CD4-positive, alpha-beta memory T cell (primary cell): ENCODE measurements at regions of chr6 and their contacts with region 1.

Region 1: DNA sequence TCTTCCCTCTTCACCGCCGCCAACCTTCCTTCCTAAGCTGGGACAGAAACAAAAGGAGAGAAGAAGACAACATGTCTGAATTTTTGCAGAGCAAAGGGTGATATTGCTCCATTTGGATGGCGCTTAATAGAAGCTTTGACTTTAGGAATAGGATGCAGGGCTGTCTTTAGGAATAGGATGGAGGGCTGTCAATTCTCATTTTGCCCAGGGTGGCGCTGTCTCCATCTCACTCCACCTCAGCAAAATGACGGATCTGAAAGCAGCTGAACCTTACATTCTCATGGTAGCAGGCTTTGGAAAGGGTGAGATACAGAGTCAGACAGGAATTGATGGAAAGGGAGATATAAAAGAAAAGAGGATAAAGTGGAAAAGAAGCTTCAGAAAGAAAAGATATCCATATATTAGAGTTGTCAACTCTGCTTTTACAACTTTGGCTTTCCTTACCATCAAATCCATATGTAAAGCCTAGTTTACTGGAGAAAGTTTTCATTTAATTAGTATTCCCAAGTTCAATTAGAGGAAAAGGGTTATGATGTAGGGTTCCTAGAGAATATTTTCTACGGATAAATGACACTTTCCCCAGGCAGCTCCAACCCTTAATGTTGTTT is 2.4 kb downstream of the MTCL3 start:
- DNase-seq: peak in 4 of 5 donors; percentile 51 to 60 (median 53)
- H3K4me3 ChIP-seq: peak overlapping the region; percentile 54 to 61
- H3K4me3 Mint-ChIP-seq: peak overlapping the region; percentile 83 to 96 (median 92)
- H3K27ac ChIP-seq: peak overlapping the region; percentile 50
- H3K27ac Mint-ChIP-seq: peak overlapping the region; percentile 43 to 93 (median 88)
- H3K4me1 ChIP-seq: peaks cover 40% of the 10 kb centered on the region
- H3K4me1 Mint-ChIP-seq: peaks cover 26 to 51% (median 38%) of the 10 kb centered on the region in 4 donors
- H3K27me3 ChIP-seq: peaks cover 16% of the 10 kb centered on the region
- H3K27me3 Mint-ChIP-seq: peaks cover 14 to 21% of the 10 kb centered on the region in 2 donors

Region 2: DNA sequence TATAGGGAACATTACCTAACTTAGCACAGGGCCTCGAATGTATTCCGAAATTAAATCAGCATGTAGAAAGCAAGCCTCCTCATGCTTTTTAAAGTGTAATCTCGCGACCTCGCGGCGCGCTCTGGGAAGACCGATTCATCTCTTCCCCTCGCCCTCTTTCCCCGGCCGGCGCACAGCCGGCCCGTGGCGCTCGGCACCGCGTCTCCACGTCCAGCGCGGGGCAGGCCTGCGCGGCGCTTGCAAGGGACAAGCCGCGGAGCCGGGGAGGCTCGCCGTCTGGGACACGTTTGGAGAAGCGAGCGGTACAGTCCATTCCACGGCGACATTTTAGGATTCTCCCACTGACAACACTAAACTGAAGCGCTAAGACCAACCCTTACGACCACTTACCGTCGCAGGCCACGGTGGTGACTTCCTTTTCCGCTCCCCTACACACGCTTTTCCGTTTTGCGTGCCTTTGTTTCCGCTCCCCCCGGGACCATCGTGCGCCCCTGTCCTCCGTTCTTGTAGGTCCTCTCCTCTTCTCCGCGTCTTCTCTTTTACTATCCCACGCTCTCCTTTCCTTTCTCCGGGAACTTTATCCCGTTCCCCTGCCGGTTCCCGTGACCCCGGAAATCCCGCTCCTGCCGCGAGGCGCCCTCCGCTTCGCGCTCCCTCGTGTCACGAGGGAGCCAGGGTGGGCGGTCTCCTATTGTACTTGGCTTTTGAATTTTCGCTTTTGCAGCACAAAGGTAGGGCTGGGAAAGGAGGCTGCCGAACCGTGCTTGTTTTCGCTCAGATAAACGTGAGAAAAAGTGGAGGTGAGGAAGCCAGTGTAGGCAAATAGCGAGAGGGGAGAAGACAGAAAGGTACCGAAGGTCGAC is 173.6 kb before region 1 on chr6 and contains the start of gene ECHDC1:
- CTCF ChIA-PET with region 1: interaction called, 3 read pairs
- POLR2A ChIA-PET with region 1: interaction called, 7 read pairs
- intact Hi-C with region 1: loop called (anchors 2 kb)
- DNase-seq: peak; percentile 65 to 71 (median 69)
- H3K4me3 ChIP-seq: peak within 1 kb of the TSS; percentile 70 to 97
- H3K4me3 Mint-ChIP-seq: no peak within 1 kb of the TSS
- H3K27ac ChIP-seq: peak within 1 kb of the TSS; percentile 65
- H3K27ac Mint-ChIP-seq: no peak within 1 kb of the TSS
- H3K4me1 ChIP-seq: peaks cover 52% of the 10 kb centered on the region
- H3K4me1 Mint-ChIP-seq: peaks cover 4 to 18% (median 12%) of the 10 kb centered on the region in 4 donors
- H3K27me3 ChIP-seq: no peaks in the 10 kb centered on the region
- H3K27me3 Mint-ChIP-seq: no peaks in the 10 kb centered on the region
- total RNA-seq, gene ECHDC1: 35.5 to 39.3 TPM

Region 3: GRCh38 chr6:127484212-127484858 is 32.4 kb before region 1 on chr6:
- CTCF ChIA-PET with region 1: interaction called, 125 read pairs
- POLR2A ChIA-PET with region 1: interaction called, 31 read pairs
- intact Hi-C with region 1: loop called (anchors 1 kb)
- DNase-seq: peak in 4 of 5 donors; percentile 15 to 40 (median 34)
- H3K4me3 ChIP-seq: peak overlapping the region; percentile 26 to 38
- H3K4me3 Mint-ChIP-seq: peak overlapping the region; percentile 73 to 91 (median 83)
- H3K27ac ChIP-seq: peak overlapping the region; percentile 41
- H3K27ac Mint-ChIP-seq: peak overlapping the region; percentile 36 to 84 (median 67)
- H3K4me1 ChIP-seq: peaks cover 17% of the 10 kb centered on the region
- H3K4me1 Mint-ChIP-seq: peaks cover 14 to 27% (median 24%) of the 10 kb centered on the region in 4 donors
- H3K27me3 ChIP-seq: no peaks in the 10 kb centered on the region
- H3K27me3 Mint-ChIP-seq: no peaks in the 10 kb centered on the region

Region 4: GRCh38 chr6:127496471-127496870 is 20.3 kb before region 1 on chr6:
- CTCF ChIA-PET with region 1: interaction called, 125 read pairs
- POLR2A ChIA-PET with region 1: interaction called, 3 read pairs
- intact Hi-C with region 1: no loop called
- DNase-seq: no peak
- H3K4me3 ChIP-seq: no peak overlapping the region
- H3K4me3 Mint-ChIP-seq: no peak overlapping the region
- H3K27ac ChIP-seq: no peak overlapping the region
- H3K27ac Mint-ChIP-seq: no peak overlapping the region
- H3K4me1 ChIP-seq: peaks cover 4% of the 10 kb centered on the region
- H3K4me1 Mint-ChIP-seq: peaks cover 0 to 4% (median 2%) of the 10 kb centered on the region in 4 donors
- H3K27me3 ChIP-seq: no peaks in the 10 kb centered on the region
- H3K27me3 Mint-ChIP-seq: no peaks in the 10 kb centered on the region

Region 5: DNA sequence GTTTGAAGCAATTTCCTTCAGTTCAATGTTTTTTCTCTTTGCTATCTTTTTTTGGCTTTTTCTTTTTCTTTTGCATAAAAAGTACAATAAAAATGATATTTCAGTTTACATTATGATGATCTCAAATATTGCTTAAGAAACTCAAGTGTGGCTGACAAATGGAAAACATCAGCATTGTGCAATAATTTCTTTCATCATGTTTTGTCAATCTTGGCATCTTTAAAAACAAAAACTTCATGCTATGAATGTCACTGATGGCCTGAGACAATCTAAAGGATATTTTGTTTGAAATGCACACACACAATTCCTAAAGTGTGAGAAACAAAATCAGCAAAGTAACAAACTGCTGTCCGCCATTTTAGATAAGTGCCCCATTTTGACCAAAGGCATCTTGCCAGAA is 16.2 kb after region 1 on chr6:
- CTCF ChIA-PET with region 1: interaction called, 43 read pairs
- POLR2A ChIA-PET with region 1: no interaction called
- intact Hi-C with region 1: no loop called
- DNase-seq: no peak
- H3K4me3 ChIP-seq: no peak overlapping the region
- H3K4me3 Mint-ChIP-seq: no peak overlapping the region
- H3K27ac ChIP-seq: no peak overlapping the region
- H3K27ac Mint-ChIP-seq: no peak overlapping the region
- H3K4me1 ChIP-seq: no peaks in the 10 kb centered on the region
- H3K4me1 Mint-ChIP-seq: no peaks in the 10 kb centered on the region
- H3K27me3 ChIP-seq: no peaks in the 10 kb centered on the region
- H3K27me3 Mint-ChIP-seq: peaks cover 10 to 15% of the 10 kb centered on the region in 2 donors

Region 6: DNA sequence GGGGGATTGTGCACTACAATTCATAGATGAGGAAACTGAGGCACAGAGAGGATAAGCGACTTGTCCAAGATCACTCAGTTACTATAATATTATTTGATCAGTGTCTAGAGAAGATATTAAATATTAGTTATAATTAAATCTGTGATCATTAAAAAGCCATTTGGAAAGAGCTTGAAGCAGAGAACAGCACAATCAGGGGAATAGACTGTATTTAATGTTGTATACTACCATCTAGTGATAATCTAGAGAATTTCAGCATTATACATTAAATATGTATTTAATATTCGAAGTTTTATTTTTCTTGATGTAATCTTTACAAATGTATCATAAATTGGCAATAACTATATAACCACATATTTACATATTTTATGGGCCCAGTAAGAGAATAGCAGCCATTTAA is 22.5 kb after region 1 on chr6:
- CTCF ChIA-PET with region 1: interaction called, 43 read pairs
- POLR2A ChIA-PET with region 1: interaction called, 3 read pairs
- intact Hi-C with region 1: loop called (anchors 1 kb)
- DNase-seq: peak in 4 of 5 donors; percentile 15 to 36 (median 22)
- H3K4me3 ChIP-seq: no peak overlapping the region
- H3K4me3 Mint-ChIP-seq: no peak overlapping the region
- H3K27ac ChIP-seq: no peak overlapping the region
- H3K27ac Mint-ChIP-seq: no peak overlapping the region
- H3K4me1 ChIP-seq: no peaks in the 10 kb centered on the region
- H3K4me1 Mint-ChIP-seq: no peaks in the 10 kb centered on the region
- H3K27me3 ChIP-seq: no peaks in the 10 kb centered on the region
- H3K27me3 Mint-ChIP-seq: peaks cover 7 to 13% of the 10 kb centered on the region in 2 donors

Region 7: GRCh38 chr6:127690092-127690491 is 173.3 kb after region 1 on chr6:
- CTCF ChIA-PET with region 1: no interaction called
- POLR2A ChIA-PET with region 1: no interaction called
- intact Hi-C with region 1: no loop called
- DNase-seq: no peak
- H3K4me3 ChIP-seq: no peak overlapping the region
- H3K4me3 Mint-ChIP-seq: no peak overlapping the region
- H3K27ac ChIP-seq: no peak overlapping the region
- H3K27ac Mint-ChIP-seq: no peak overlapping the region
- H3K4me1 ChIP-seq: no peaks in the 10 kb centered on the region
- H3K4me1 Mint-ChIP-seq: peaks cover 0 to 4% (median 0%) of the 10 kb centered on the region in 4 donors
- H3K27me3 ChIP-seq: no peaks in the 10 kb centered on the region
- H3K27me3 Mint-ChIP-seq: no peaks in the 10 kb centered on the region